Activated CD4-positive, alpha-beta T cell treated with anti-CD3 and anti-CD28 coated beads, Interleukin-2, amount 10 ng/mL, durations not matched to agents 24 days and 14 days (primary cell): ENCODE measurements at regions of chr1 and their contacts with region 1.

Region 1: GRCh38 chr1:227762233-227762911 is 27.1 kb downstream of the SNAP47 start:
- DNase-seq: peak; percentile 96
- H3K4me3 Mint-ChIP-seq: peak overlapping the region; percentile 62
- H3K27ac Mint-ChIP-seq: peak overlapping the region; percentile 71
- H3K4me1 Mint-ChIP-seq: peaks cover 81% of the 10 kb centered on the region
- H3K27me3 Mint-ChIP-seq: no peaks in the 10 kb centered on the region

Region 2: GRCh38 chr1:227734856-227735538 is 27.4 kb before region 1 on chr1 and contains the starts of genes JMJD4 and SNAP47:
- intact Hi-C with region 1: loop called (anchors 2 kb)
- DNase-seq: peak; percentile 99
- H3K4me3 Mint-ChIP-seq: peak within 1 kb of the TSS; percentile 98
- H3K27ac Mint-ChIP-seq: peak within 1 kb of the TSS; percentile 93
- H3K4me1 Mint-ChIP-seq: peaks cover 26% of the 10 kb centered on the region
- H3K27me3 Mint-ChIP-seq: peaks cover 2% of the 10 kb centered on the region
- total RNA-seq, gene JMJD4: 34.8 and 35.1 TPM in 2 replicates
- total RNA-seq, gene SNAP47: 28.6 and 30.9 TPM in 2 replicates

Region 3: DNA sequence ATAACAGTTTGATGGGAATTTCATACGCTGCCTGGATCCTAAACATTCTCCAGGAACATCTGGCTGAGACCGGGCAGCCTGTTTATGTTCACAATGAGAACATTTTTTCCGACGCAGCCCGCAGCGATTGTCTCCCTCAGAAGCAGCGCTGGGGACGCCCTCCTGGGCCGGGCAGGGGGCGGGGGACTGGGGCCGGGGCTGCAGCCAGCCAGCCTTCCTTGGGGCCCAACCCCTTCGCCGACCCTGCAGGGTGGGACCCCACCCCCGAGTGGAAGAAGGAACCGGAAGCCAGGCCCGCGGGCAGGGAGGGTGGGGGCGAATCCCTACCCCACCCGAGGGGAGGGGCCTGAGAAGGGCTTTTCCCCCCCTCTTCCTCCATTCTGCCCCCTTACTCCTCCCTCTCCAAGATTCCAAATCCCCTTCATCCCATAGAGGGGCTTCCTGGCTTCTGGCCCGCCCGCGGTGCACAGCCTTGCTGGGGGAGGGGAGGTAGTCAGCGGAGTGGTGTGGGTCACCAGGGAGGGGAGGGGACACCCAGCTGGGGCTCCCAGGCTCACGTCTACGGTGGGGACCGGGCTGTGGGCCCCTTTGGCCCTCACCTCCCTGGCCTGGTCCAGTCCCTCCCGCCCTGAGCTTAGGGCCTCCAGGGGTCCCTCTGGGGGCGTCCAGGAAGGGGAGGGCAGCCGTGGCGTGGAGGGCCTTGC is 124.8 kb after region 1 on chr1:
- intact Hi-C with region 1: loop called (anchors 10 kb)
- DNase-seq: peak; percentile 65
- H3K4me3 Mint-ChIP-seq: no peak overlapping the region
- H3K27ac Mint-ChIP-seq: no peak overlapping the region
- H3K4me1 Mint-ChIP-seq: peaks cover 5% of the 10 kb centered on the region
- H3K27me3 Mint-ChIP-seq: no peaks in the 10 kb centered on the region

Region 4: DNA sequence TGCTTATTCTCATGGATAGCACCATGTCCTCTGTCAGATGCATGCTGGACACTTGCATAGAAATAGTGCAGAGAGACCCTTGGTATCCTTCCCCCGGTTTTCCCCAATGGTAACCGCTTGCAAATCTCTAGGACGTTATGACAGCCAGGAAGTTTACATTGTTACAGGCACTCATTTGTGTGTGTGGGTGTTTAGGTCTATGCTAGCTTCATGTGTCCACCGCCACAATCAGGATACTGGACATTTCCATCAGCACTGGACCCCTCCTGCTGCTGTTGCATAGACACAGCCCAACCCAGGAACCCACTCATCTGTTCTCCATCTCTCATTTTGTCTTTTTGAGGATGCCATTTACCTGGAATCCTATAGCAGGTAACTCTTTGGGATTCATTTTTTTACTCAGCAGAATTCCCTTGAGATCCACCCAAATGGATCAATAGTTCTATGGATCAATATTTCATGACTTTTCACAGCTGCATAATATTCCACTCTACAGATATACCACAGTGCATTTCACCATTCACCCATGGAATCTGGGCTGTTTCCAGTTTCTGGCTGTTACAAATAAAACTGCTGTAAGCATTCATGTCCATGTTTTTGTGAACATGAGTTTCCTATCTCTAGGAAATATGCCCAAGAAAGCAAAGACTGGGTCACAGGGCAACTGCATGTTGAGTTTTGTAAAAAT is 191.9 kb after region 1 on chr1:
- intact Hi-C with region 1: loop called (anchors 1 kb)
- DNase-seq: no peak
- H3K4me3 Mint-ChIP-seq: no peak overlapping the region
- H3K27ac Mint-ChIP-seq: no peak overlapping the region
- H3K4me1 Mint-ChIP-seq: no peaks in the 10 kb centered on the region
- H3K27me3 Mint-ChIP-seq: peaks cover 40% of the 10 kb centered on the region